CD4-positive, alpha-beta T cell (primary cell): ENCODE measurements at regions of chr17 and their contacts with region 1.

Region 1: DNA sequence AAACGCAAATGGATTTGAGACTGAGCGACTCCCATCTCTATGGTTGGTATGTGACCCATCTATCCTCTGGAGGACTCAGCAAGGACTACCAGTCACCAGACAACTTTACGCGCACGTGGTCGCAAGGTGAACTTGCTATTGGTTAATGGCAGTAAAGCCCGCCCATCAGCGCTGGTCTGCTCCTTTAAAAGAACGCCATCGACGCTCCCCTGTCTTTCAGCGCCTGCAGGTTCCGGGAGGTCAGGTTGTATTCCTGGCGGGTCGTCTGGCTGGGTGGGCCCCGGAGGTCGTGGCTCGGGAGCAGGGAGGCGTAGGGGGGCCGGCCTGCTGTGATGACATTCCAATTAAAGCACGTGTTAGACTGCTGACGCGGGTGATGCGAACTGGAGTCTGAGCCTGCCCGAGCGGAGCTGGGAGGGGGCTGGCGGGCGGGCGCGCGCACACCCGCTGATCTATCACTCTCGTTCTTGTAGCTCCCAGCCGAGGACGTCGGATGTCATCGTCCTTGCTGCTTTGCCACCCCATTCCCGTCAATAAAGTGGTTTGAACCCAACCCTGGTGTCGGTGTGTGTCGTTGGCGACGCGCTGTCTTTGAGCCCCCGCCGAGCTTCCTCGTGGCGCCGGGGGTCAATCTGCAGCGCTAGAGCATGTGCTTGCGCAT is 15.9 kb upstream of the ERN1 start:
- DNase-seq: peak; percentile 91 to 99 (median 95)
- ATAC-seq: peak; percentile 88
- H3K4me3 ChIP-seq: peak overlapping the region; percentile 78
- H3K4me3 Mint-ChIP-seq: no peak overlapping the region
- H3K27ac ChIP-seq: peak overlapping the region; percentile 73 to 91
- H3K27ac Mint-ChIP-seq: no peak overlapping the region
- H3K4me1 ChIP-seq: peaks cover 21% of the 10 kb centered on the region
- H3K4me1 Mint-ChIP-seq: peaks cover 19% of the 10 kb centered on the region
- H3K27me3 ChIP-seq: no peaks in the 10 kb centered on the region
- H3K27me3 Mint-ChIP-seq: no peaks in the 10 kb centered on the region
- CTCF ChIP-seq: no peak

Region 2: GRCh38 chr17:63621766-63622519 is 523.9 kb before region 1 on chr17 and contains the start of gene MAP3K3:
- CTCF ChIA-PET with region 1: no interaction called
- POLR2A ChIA-PET with region 1: interaction called, 11 read pairs
- intact Hi-C with region 1: no loop called
- DNase-seq: peak; percentile 91 to 100 (median 95)
- ATAC-seq: peak; percentile 90
- H3K4me3 ChIP-seq: peak within 1 kb of the TSS; percentile 72
- H3K4me3 Mint-ChIP-seq: peak within 1 kb of the TSS; percentile 99
- H3K27ac ChIP-seq: peak within 1 kb of the TSS; percentile 51 to 69
- H3K27ac Mint-ChIP-seq: peak within 1 kb of the TSS; percentile 88
- H3K4me1 ChIP-seq: peaks cover 25% of the 10 kb centered on the region
- H3K4me1 Mint-ChIP-seq: peaks cover 44% of the 10 kb centered on the region
- H3K27me3 ChIP-seq: no peaks in the 10 kb centered on the region
- H3K27me3 Mint-ChIP-seq: no peaks in the 10 kb centered on the region
- CTCF ChIP-seq: no peak
- total RNA-seq, gene MAP3K3: 75.8 to 78.1 TPM

Region 3: DNA sequence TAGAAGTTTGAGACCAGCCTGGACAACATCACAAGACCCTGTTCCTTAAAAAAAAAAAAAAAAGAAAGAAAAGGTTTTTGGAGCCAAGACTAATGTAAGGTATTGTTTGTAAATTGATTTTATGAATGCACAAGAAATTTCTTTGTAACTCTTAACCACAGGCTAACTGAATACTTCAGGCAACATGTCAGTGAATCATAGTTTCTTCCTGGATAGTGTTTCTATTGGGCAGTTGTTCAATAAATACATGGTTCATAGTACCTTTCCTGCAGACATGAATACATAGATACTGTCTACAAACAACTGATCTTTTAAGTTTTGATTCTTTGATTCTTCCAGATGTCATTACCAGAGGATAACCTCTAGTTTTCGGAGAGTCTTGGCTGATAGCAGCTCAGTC is 360.3 kb before region 1 on chr17:
- CTCF ChIA-PET with region 1: no interaction called
- POLR2A ChIA-PET with region 1: no interaction called
- intact Hi-C with region 1: no loop called
- DNase-seq: no peak
- ATAC-seq: no peak
- H3K4me3 ChIP-seq: no peak overlapping the region
- H3K4me3 Mint-ChIP-seq: no peak overlapping the region
- H3K27ac ChIP-seq: no peak overlapping the region
- H3K27ac Mint-ChIP-seq: peak overlapping the region; percentile 21
- H3K4me1 ChIP-seq: peaks cover 9% of the 10 kb centered on the region
- H3K4me1 Mint-ChIP-seq: peaks cover 39% of the 10 kb centered on the region
- H3K27me3 ChIP-seq: no peaks in the 10 kb centered on the region
- H3K27me3 Mint-ChIP-seq: no peaks in the 10 kb centered on the region
- CTCF ChIP-seq: no peak

Region 4: GRCh38 chr17:63946440-63947367 is 199.2 kb before region 1 on chr17:
- CTCF ChIA-PET with region 1: no interaction called
- POLR2A ChIA-PET with region 1: interaction called, 13 read pairs
- intact Hi-C with region 1: no loop called
- DNase-seq: peak; percentile 29 to 81 (median 40)
- ATAC-seq: peak; percentile 80
- H3K4me3 ChIP-seq: peak overlapping the region; percentile 39
- H3K4me3 Mint-ChIP-seq: peak overlapping the region; percentile 58
- H3K27ac ChIP-seq: no peak overlapping the region
- H3K27ac Mint-ChIP-seq: no peak overlapping the region
- H3K4me1 ChIP-seq: peaks cover 25% of the 10 kb centered on the region
- H3K4me1 Mint-ChIP-seq: peaks cover 29% of the 10 kb centered on the region
- H3K27me3 ChIP-seq: no peaks in the 10 kb centered on the region
- H3K27me3 Mint-ChIP-seq: no peaks in the 10 kb centered on the region
- CTCF ChIP-seq: peak; percentile 87

Region 5: GRCh38 chr17:64051153-64051552 is 94.7 kb before region 1 on chr17:
- CTCF ChIA-PET with region 1: no interaction called
- POLR2A ChIA-PET with region 1: interaction called, 34 read pairs
- intact Hi-C with region 1: no loop called
- DNase-seq: peak in 5 of 14 experiments; percentile 16 to 88 (median 69)
- ATAC-seq: peak; percentile 100
- H3K4me3 ChIP-seq: no peak overlapping the region
- H3K4me3 Mint-ChIP-seq: peak overlapping the region; percentile 17
- H3K27ac ChIP-seq: peak overlapping the region in 1 of 2 donors; percentile 78
- H3K27ac Mint-ChIP-seq: peak overlapping the region; percentile 85
- H3K4me1 ChIP-seq: peaks cover 59% of the 10 kb centered on the region
- H3K4me1 Mint-ChIP-seq: peaks cover 57% of the 10 kb centered on the region
- H3K27me3 ChIP-seq: no peaks in the 10 kb centered on the region
- H3K27me3 Mint-ChIP-seq: no peaks in the 10 kb centered on the region
- CTCF ChIP-seq: no peak

Region 6: DNA sequence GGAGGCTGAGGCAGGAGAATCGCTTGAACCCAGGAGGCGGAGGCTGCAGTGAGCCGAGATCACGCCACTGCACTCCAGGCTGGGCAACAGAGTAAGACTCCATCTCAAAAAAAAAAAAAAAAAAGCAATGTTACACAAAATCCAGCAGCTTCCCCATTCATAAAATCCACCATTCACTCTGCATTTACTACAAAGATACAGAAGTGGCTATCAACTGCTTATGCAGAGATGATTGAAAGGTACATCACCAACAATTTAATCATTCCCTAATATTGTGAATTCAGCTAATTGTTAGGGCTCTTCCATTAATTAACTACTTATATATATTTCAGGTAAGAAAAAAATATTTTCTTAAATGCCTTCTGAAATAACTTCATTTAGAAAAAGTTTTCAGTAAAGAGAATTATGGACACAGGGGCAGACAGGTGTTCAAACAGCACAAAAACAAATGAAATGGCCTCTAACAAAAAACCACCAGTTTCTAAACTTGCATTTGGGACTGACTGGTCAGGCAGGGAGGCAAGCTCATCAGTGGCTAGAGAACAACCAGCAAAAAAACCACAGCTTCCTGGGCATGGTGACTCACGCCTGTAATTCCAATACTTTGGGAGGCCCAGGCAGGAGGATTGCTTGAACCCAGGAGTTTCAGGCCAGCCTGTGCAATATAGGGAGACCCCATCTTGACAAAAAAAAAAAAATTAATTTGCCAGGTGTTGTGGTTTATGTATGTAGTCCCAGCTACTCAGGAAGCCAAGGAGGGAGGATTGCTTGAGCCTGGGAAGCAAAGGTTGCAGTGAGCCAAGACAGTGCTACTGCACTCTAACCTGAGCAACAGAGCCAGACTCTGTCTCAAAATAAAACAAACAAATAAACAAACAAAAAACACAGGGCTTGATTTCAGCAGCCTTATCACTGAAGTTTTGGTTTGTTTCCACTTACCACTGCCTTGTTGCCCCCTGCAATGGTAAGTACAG is 42.2 kb before region 1 on chr17:
- CTCF ChIA-PET with region 1: no interaction called
- POLR2A ChIA-PET with region 1: interaction called, 19 read pairs
- intact Hi-C with region 1: no loop called
- DNase-seq: peak in 1 of 14 experiments; percentile 37
- ATAC-seq: no peak
- H3K4me3 ChIP-seq: no peak overlapping the region
- H3K4me3 Mint-ChIP-seq: peak overlapping the region; percentile 30
- H3K27ac ChIP-seq: no peak overlapping the region
- H3K27ac Mint-ChIP-seq: no peak overlapping the region
- H3K4me1 ChIP-seq: peaks cover 60% of the 10 kb centered on the region
- H3K4me1 Mint-ChIP-seq: peaks cover 72% of the 10 kb centered on the region
- H3K27me3 ChIP-seq: no peaks in the 10 kb centered on the region
- H3K27me3 Mint-ChIP-seq: no peaks in the 10 kb centered on the region
- CTCF ChIP-seq: no peak

Region 7: DNA sequence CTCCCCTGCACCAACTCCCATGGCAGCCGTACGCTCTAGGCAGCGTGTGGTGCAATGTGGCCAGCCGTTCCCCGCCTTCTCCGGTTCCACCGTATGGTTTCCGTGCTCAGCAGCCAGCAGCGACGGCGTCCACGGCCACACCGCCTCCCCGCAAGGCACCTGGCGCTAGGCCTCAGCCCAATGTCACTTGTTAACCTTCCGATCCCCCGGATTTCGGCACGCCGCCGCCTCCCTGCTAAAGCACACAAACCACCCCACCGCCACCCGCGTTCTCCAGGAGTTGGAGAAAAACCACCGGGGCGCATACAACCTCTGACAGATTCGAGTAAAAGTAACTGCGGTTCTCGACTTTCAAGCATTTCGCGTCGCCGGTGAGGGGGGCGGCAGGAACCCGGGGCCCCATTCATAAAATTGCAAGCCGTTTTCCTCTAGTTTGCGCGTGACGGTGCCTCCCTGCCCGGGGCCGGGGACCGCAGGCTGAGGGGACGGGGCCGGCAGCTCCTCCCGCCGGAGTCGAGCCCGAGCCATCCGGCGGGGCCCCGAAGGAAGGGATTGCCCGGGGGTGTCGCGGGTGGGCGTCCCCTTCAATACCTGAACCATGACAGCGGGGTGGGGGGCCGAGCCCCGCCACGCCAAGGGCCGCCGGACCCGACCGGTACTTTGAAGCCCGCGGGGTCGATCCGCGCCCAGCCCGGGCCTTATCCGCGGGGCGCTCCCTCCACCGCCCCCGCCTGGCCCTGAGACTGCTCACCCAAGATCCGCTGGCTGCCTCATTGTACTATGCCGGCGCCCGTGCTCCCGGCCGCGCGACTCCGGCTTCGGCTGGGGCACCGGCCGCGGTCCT is 116.8 kb after region 1 on chr17 and contains the start of gene TEX2:
- CTCF ChIA-PET with region 1: no interaction called
- POLR2A ChIA-PET with region 1: interaction called, 58 read pairs
- intact Hi-C with region 1: loop called (anchors 1 to 2 kb)
- DNase-seq: peak; percentile 39 to 87 (median 60)
- ATAC-seq: peak; percentile 47
- H3K4me3 ChIP-seq: peak within 1 kb of the TSS; percentile 70
- H3K4me3 Mint-ChIP-seq: peak within 1 kb of the TSS; percentile 92
- H3K27ac ChIP-seq: peak within 1 kb of the TSS; percentile 70 to 86
- H3K27ac Mint-ChIP-seq: peak within 1 kb of the TSS; percentile 95
- H3K4me1 ChIP-seq: peaks cover 28% of the 10 kb centered on the region
- H3K4me1 Mint-ChIP-seq: peaks cover 46% of the 10 kb centered on the region
- H3K27me3 ChIP-seq: no peaks in the 10 kb centered on the region
- H3K27me3 Mint-ChIP-seq: peaks cover 6% of the 10 kb centered on the region
- CTCF ChIP-seq: no peak
- total RNA-seq, gene TEX2: 8.6 to 8.9 TPM